ENCODE measurements at regions of chr10 and their contacts with region 1.

Region 1: DNA sequence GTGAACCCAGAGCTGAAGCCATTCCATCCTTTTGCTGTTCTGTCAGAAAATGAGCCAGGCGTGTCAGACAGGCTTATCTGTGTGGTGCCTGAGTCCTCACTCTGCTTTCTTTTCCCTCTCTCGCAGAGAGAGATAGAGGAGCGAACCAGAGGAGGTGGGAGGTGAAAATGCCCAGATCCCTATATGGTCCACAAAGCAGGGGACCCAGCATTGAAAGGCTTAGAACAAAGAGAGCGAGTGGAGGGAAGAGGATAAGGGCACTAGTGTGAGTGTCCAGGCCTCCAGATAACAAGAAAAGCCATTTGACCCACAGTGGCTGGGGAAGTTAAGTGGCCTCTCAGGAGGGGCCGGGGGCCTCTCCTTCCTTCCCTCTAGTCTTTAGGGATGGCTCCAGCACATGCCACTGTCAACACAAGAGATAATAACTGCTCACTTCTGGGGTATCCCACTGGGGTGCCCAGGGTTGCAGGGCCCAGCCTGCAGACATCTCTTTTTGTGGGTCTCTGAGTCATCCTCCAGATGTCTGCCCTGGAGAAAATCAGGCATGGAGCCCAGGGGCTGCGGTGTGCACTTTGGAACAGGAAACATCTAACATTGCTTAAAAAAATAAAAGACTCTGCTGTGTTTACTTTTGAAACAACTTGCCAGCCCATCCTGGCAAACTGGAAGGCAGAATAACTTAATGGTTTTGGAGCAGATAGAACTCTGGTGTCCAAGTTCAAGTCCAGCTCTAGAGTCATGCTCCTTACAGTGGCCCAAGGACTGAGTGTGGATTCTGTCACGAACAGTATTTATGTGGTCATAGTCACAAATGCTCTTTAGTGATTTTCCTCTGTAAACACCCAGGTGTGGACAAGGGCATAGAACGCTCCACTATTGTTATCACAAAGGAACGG is 189.5 kb downstream of the CXCL12 start:
- DNase-seq: peak; percentile 85
- H3K4me3 Mint-ChIP-seq: no peak overlapping the region
- H3K27ac Mint-ChIP-seq: no peak overlapping the region
- H3K4me1 Mint-ChIP-seq: peaks cover 24% of the 10 kb centered on the region
- H3K27me3 Mint-ChIP-seq: peaks cover 78% of the 10 kb centered on the region
- CTCF ChIP-seq: no peak

Region 2: DNA sequence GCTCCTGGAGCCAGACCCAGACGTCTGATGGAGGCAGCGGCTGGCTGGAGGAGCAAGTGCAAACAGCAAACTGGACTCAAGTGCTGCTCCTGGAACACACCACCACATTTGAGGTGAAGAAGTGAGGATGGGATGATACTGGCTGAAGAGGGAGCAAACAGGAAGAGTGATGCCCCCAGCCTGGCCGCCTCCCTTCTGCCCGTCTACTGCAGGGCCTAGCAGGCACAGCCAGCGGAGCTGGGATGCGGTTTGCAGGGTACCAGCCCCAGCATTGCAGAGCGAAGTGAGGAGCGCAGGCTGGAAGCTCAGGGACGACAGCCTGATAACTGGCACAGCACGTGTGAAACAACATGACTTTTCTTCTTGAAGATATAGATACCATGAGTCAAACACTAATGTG is 434.8 kb before region 1 on chr10:
- CTCF ChIA-PET with region 1: no interaction called
- POLR2A ChIA-PET with region 1: no interaction called
- intact Hi-C with region 1: no loop called
- DNase-seq: no peak
- H3K4me3 Mint-ChIP-seq: no peak overlapping the region
- H3K27ac Mint-ChIP-seq: no peak overlapping the region
- H3K4me1 Mint-ChIP-seq: no peaks in the 10 kb centered on the region
- H3K27me3 Mint-ChIP-seq: no peaks in the 10 kb centered on the region
- CTCF ChIP-seq: no peak

Region 3: GRCh38 chr10:44300666-44301649 is 105.6 kb after region 1 on chr10:
- CTCF ChIA-PET with region 1: no interaction called
- POLR2A ChIA-PET with region 1: no interaction called
- intact Hi-C with region 1: loop called (anchors 10 kb)
- DNase-seq: peak; percentile 97
- H3K4me3 Mint-ChIP-seq: no peak overlapping the region
- H3K27ac Mint-ChIP-seq: no peak overlapping the region
- H3K4me1 Mint-ChIP-seq: peaks cover 16% of the 10 kb centered on the region
- H3K27me3 Mint-ChIP-seq: peaks cover 22% of the 10 kb centered on the region
- CTCF ChIP-seq: no peak

Region 4: DNA sequence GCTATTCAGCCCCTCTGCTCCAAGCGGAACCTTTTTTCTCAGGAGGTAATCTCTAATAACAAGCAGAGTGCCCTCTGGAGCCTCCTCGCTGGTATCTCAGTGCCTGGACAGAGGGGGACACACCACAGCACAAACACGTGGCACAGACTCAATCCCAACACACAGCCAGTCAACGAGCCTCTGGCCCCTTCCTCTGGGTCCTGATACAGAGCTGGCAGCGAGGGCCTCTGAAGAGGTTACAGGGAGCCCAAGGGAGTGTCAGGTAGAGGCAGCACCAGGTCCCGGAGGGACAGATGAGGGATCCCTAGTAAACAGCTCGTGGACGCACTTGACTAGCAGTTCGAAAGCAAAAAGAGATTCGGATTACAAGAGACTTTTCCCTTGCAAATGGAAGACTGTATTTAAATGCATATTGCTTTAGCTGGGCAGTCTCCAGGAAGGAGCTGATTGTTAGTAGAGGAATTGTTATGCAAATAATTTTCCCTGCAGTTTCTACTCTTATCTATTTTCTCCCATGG is 175.4 kb after region 1 on chr10:
- CTCF ChIA-PET with region 1: no interaction called
- POLR2A ChIA-PET with region 1: no interaction called
- intact Hi-C with region 1: no loop called
- DNase-seq: no peak
- H3K4me3 Mint-ChIP-seq: no peak overlapping the region
- H3K27ac Mint-ChIP-seq: no peak overlapping the region
- H3K4me1 Mint-ChIP-seq: no peaks in the 10 kb centered on the region
- H3K27me3 Mint-ChIP-seq: peaks cover 51% of the 10 kb centered on the region
- CTCF ChIP-seq: no peak